PC-3 (cell line): ENCODE measurements at regions of chr1 and their contacts with region 1.

Region 1: GRCh38 chr1:175758601-175759000 is 15.2 kb upstream of the TNR start:
- DNase-seq: no peak
- ATAC-seq: no peak
- H3K4me3 ChIP-seq: no peak overlapping the region
- H3K27ac ChIP-seq: no peak overlapping the region
- H3K4me1 ChIP-seq: no peaks in the 10 kb centered on the region
- H3K27me3 ChIP-seq: peaks cover 20% of the 10 kb centered on the region
- CTCF ChIP-seq: no peak

Region 2: DNA sequence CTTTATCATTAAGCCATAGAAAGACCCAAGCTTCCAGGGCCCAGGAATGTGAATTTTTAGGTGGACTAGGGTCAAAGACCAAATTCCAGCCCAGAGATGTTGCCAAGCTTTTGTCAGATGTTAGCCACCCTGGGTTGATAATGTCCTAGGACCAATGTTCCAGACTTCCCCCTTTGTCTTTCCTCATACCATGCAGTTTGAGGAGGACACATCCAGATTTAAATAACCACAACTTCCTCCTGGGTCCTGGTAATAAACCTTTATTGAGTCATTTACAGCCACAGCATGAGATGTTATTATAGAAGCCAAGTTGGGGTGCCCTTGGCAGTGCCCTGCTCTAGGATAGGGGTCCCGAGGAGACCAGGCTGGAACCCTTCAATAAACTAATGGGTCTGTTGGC is 21.1 kb before region 1 on chr1:
- CTCF ChIA-PET with region 1: no interaction called
- POLR2A ChIA-PET with region 1: interaction called, 11 read pairs
- intact Hi-C with region 1: no loop called
- DNase-seq: no peak
- ATAC-seq: no peak
- H3K4me3 ChIP-seq: no peak overlapping the region
- H3K27ac ChIP-seq: no peak overlapping the region
- H3K4me1 ChIP-seq: no peaks in the 10 kb centered on the region
- H3K27me3 ChIP-seq: no peaks in the 10 kb centered on the region
- CTCF ChIP-seq: no peak